Activated CD4-positive, alpha-beta memory T cell treated with anti-CD3 and anti-CD28 coated beads, Interleukin-2, amount 10 ng/mL, durations not matched to agents 7 days and 5 days (primary cell): ENCODE measurements at regions of chr7 and their contacts with region 1.

Region 1: GRCh38 chr7:156612930-156613329 is 27.6 kb upstream of the RNF32 start:
- DNase-seq: peak; percentile 93
- H3K4me3 Mint-ChIP-seq: peak overlapping the region; percentile 3
- H3K27ac Mint-ChIP-seq: peak overlapping the region; percentile 53
- H3K4me1 Mint-ChIP-seq: peaks cover 47% of the 10 kb centered on the region
- H3K27me3 Mint-ChIP-seq: peaks cover 62% of the 10 kb centered on the region

Region 2: GRCh38 chr7:156423876-156424275 is 189.1 kb before region 1 on chr7:
- CTCF ChIA-PET with region 1: no interaction called
- POLR2A ChIA-PET with region 1: no interaction called
- DNase-seq: no peak
- H3K4me3 Mint-ChIP-seq: no peak overlapping the region
- H3K27ac Mint-ChIP-seq: no peak overlapping the region
- H3K4me1 Mint-ChIP-seq: no peaks in the 10 kb centered on the region
- H3K27me3 Mint-ChIP-seq: peaks cover 24% of the 10 kb centered on the region

Region 3: GRCh38 chr7:156625580-156625979 is 12.7 kb after region 1 on chr7:
- CTCF ChIA-PET with region 1: interaction called, 6 read pairs
- POLR2A ChIA-PET with region 1: interaction called, 10 read pairs
- DNase-seq: peak; percentile 46
- H3K4me3 Mint-ChIP-seq: peak overlapping the region; percentile 22
- H3K27ac Mint-ChIP-seq: peak overlapping the region; percentile 72
- H3K4me1 Mint-ChIP-seq: peaks cover 20% of the 10 kb centered on the region
- H3K27me3 Mint-ChIP-seq: peaks cover 29% of the 10 kb centered on the region